ENCODE measurements at regions of chr16 and their contacts with region 1.

Region 1: GRCh38 chr16:66872943-66873684 is 7.2 kb upstream of the PDP2 start:
- DNase-seq: peak; percentile 98
- ATAC-seq: peak; percentile 93
- H3K4me3 Mint-ChIP-seq: peak overlapping the region; percentile 80
- H3K27ac Mint-ChIP-seq: peak overlapping the region; percentile 93
- H3K4me1 Mint-ChIP-seq: peaks cover 53% of the 10 kb centered on the region
- H3K27me3 Mint-ChIP-seq: no peaks in the 10 kb centered on the region

Region 2: GRCh38 chr16:66608241-66609138 is 264.6 kb before region 1 on chr16:
- CTCF ChIA-PET with region 1: interaction called, 12 read pairs
- POLR2A ChIA-PET with region 1: interaction called, 3 read pairs
- DNase-seq: peak; percentile 85
- ATAC-seq: peak; percentile 27
- H3K4me3 Mint-ChIP-seq: no peak overlapping the region
- H3K27ac Mint-ChIP-seq: peak overlapping the region; percentile 79
- H3K4me1 Mint-ChIP-seq: peaks cover 37% of the 10 kb centered on the region
- H3K27me3 Mint-ChIP-seq: no peaks in the 10 kb centered on the region

Region 3: GRCh38 chr16:66660422-66661209 is 212.5 kb before region 1 on chr16:
- CTCF ChIA-PET with region 1: interaction called, 10 read pairs
- POLR2A ChIA-PET with region 1: no interaction called
- DNase-seq: no peak
- ATAC-seq: no peak
- H3K4me3 Mint-ChIP-seq: no peak overlapping the region
- H3K27ac Mint-ChIP-seq: no peak overlapping the region
- H3K4me1 Mint-ChIP-seq: peaks cover 4% of the 10 kb centered on the region
- H3K27me3 Mint-ChIP-seq: peaks cover 15% of the 10 kb centered on the region

Region 4: GRCh38 chr16:66740010-66740409 is 133.1 kb before region 1 on chr16:
- CTCF ChIA-PET with region 1: interaction called, 11 read pairs
- POLR2A ChIA-PET with region 1: no interaction called
- DNase-seq: peak; percentile 56
- ATAC-seq: peak; percentile 73
- H3K4me3 Mint-ChIP-seq: no peak overlapping the region
- H3K27ac Mint-ChIP-seq: peak overlapping the region; percentile 9
- H3K4me1 Mint-ChIP-seq: peaks cover 27% of the 10 kb centered on the region
- H3K27me3 Mint-ChIP-seq: no peaks in the 10 kb centered on the region

Region 5: GRCh38 chr16:66844342-66845079 is 28.6 kb before region 1 on chr16 and contains the start of gene CA7:
- CTCF ChIA-PET with region 1: interaction called, 24 read pairs
- POLR2A ChIA-PET with region 1: interaction called, 5 read pairs
- DNase-seq: no peak
- ATAC-seq: peak; percentile 30
- H3K4me3 Mint-ChIP-seq: peak within 1 kb of the TSS; percentile 18
- H3K27ac Mint-ChIP-seq: no peak within 1 kb of the TSS
- H3K4me1 Mint-ChIP-seq: peaks cover 25% of the 10 kb centered on the region
- H3K27me3 Mint-ChIP-seq: peaks cover 48% of the 10 kb centered on the region
- total RNA-seq, gene CA7: not detected

Region 6: DNA sequence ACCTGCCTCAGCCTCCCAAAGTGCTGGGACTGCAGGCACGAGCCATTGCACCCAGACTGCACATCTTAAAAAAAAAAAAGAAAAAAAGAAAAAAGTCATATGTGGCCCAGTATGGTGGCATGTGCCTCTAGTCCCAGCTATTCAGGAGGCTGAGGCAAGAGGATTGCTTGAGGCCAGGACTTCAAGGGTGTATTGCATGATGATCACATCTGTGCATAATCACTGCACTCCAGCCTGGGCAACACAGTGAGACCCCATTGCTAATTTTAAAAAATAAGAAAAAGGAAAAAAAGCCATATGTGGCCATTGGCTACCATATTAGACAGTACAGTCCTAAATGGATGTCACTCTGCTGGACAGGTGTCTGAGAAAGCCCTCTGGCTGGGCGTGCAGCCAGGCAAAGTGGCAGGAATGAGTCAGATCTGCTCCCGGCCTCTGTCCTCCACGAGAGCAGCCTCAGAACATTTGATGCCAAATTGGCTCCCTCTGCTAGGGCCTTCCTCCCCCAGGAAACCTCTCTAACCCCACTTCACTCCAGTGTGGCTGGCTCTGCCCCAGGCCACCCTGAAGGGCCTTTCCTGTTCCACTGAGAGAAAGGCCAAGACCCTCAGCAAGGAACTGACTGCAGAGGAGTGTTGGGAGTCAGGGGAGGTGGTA is 14.2 kb before region 1 on chr16:
- CTCF ChIA-PET with region 1: interaction called, 22 read pairs
- POLR2A ChIA-PET with region 1: interaction called, 3 read pairs
- DNase-seq: no peak
- ATAC-seq: no peak
- H3K4me3 Mint-ChIP-seq: no peak overlapping the region
- H3K27ac Mint-ChIP-seq: no peak overlapping the region
- H3K4me1 Mint-ChIP-seq: no peaks in the 10 kb centered on the region
- H3K27me3 Mint-ChIP-seq: no peaks in the 10 kb centered on the region

Measured in activated CD8-positive, alpha-beta T cell treated with anti-CD3 and anti-CD28 coated beads, Interleukin-2, amount 10 ng/mL, durations not matched to agents 7 days and 5 days (primary cell).